Prostate gland (tissue), 2 donors: ENCODE measurements at regions of chr12 and their contacts with region 1.

Region 1: DNA sequence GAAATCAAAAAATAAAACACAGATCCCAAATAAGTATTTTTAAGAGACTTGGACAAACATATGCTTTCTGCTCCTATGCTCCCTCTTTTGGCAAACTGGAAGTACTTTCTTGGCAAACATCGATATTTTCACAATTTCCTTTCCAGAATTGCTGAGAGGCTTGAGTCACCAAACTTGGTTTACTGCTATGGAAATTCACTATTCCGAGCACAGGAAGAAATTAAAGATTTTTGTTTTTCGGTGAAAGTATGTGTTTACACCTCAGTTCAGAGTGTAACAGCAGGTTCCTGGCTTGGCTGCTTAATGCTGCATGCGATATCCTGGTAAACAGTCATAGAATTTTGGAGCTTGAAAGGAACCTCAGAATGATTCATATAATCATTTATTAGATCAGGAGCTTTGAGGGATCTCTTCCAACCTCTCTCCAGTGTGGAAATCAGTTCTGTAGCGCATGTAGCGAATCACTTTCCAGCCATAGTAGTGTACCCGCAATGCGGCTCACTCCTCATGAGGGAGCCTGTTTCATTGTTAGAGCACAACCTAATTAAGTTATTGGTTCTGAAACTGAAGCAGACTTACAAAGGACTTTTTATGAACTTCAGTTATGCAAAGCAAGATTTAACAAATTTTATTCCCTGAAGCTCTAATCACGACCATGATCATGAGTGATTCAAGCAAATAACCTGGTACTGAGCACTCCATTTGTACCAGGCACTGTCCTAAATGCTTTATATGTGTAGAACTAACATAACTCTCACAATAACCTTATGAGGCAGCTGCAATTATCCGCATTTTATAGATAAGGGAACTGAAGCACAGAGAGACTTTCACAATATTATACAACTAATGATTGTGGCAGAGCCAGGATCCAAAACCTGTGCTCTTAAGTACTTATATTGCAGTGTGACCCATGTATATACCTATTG is 56.4 kb upstream of the ATP2A2 start:
- DNase-seq: peak; percentile 43
- H3K4me3 ChIP-seq: no peak overlapping the region
- H3K27ac ChIP-seq: peak overlapping the region; percentile 70 to 78
- H3K4me1 ChIP-seq: peaks cover 6% of the 10 kb centered on the region
- H3K27me3 ChIP-seq: no peaks in the 10 kb centered on the region
- CTCF ChIP-seq: peak in 3 of 4 experiments; percentile 29 to 66 (median 62)
- POLR2A ChIP-seq: no peak

Region 2: GRCh38 chr12:110109037-110109836 is 115.4 kb before region 1 on chr12:
- intact Hi-C with region 1: loop called (anchors 2 kb)
- DNase-seq: peak; percentile 69
- H3K4me3 ChIP-seq: no peak overlapping the region
- H3K27ac ChIP-seq: peak overlapping the region; percentile 83 to 87
- H3K4me1 ChIP-seq: no peaks in the 10 kb centered on the region
- H3K27me3 ChIP-seq: no peaks in the 10 kb centered on the region
- CTCF ChIP-seq: no peak
- POLR2A ChIP-seq: no peak

Region 3: DNA sequence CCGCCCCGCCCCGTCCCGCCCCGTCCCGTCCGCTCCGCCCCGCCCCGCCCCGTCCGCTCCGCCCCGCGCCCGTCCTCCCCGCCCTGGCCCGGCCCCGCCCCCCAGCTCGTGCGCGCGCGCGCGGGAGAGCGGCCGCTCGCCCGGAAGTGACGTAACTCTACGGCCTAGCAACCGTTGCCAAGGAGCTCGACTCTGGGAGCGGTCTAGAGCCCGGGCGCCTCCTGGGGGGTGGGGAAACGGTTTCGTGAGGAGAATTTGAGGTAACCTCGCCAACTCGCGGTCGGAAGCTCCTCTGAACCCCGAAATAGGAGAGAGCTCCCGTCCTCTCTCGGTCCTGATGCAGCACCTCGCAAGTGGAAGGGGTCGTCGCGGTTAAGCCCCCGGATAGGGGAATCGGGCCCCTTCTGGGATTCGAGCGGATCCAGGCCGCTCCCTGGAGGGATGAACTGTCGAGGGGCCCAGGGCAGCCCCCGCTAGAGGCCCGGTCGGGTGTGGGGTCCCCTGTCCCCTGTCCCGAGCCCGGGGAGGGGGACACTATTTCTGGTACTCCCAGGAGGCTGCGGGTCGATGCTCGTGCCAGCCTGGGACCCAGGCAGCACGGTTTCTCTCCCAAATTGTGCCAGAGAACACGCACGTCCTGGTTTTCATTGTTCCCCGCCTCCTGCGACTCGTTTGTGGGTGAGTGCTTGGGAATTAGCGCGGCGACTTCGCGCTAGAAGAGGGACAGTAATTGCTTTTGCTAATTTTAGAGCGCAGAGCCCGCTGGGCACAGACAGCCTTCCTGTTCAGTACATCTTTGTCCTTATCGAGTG is 100.3 kb before region 1 on chr12 and contains the start of gene IFT81:
- intact Hi-C with region 1: loop called (anchors 5 kb)
- DNase-seq: peak; percentile 95
- H3K4me3 ChIP-seq: peak within 1 kb of the TSS; percentile 97 to 98
- H3K27ac ChIP-seq: peak within 1 kb of the TSS; percentile 90 to 91
- H3K4me1 ChIP-seq: peaks cover 2% of the 10 kb centered on the region
- H3K27me3 ChIP-seq: no peaks in the 10 kb centered on the region
- CTCF ChIP-seq: no peak
- POLR2A ChIP-seq: peak; percentile 52
- total RNA-seq, gene IFT81: 11.2 to 16.1 TPM

Region 4: DNA sequence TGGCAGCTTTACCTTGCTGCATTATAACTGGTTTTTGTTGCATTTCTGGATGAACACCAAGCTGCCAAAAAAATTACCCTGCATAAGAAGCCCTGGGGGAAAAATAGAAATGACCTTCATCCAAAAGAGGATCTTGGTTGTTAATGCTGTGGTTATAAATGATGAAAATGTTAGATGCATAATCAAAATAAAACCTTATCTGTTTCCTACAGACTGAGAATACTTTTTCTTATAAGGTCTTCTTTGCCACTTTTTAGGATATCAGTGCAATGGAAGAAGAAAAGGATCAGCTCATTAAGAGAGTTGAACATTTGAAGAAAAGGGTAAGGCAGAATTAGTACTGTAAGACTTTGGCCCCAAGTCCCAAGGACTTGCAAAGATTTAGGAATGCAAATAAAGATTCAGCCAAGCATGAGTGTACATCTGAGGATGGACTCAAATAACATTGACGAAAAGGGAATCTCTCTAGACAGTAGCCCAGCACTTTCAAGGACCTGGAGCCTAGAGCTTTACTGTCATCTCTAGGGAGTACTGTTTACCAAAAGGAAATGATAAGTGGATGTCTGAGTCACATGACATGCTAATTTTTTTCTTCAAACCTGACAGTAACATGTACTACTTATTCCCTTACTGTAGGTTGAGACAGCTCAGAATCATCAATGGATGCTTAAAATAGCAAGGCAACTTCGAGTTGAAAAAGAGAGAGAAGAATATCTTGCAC is 89.8 kb before region 1 on chr12:
- intact Hi-C with region 1: no loop called
- DNase-seq: no peak
- H3K4me3 ChIP-seq: no peak overlapping the region
- H3K27ac ChIP-seq: peak overlapping the region in 1 of 2 donors; percentile 21
- H3K4me1 ChIP-seq: no peaks in the 10 kb centered on the region
- H3K27me3 ChIP-seq: no peaks in the 10 kb centered on the region
- CTCF ChIP-seq: no peak
- POLR2A ChIP-seq: no peak

Region 5: DNA sequence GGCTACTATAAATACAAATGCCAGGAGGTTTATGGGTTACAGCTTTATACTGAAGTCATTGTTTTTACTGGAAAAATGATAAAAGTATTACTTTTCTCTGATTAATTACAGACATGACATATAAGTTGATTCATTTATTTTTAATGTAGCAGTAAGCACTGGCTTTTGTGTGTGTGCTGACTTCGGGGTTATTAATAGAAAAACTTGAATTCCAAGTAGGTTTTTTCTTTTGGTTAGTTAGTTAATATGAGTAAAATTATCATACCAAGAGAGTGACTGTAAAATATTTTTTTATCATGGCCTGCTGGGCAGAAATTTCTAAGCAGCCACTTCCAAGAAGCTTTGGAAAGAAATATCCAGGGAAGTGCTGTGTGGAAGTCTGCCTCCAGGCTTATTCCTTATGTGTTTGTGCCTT is 44.0 kb before region 1 on chr12:
- intact Hi-C with region 1: loop called (anchors 5 kb)
- DNase-seq: no peak
- H3K4me3 ChIP-seq: no peak overlapping the region
- H3K27ac ChIP-seq: no peak overlapping the region
- H3K4me1 ChIP-seq: no peaks in the 10 kb centered on the region
- H3K27me3 ChIP-seq: no peaks in the 10 kb centered on the region
- CTCF ChIP-seq: no peak
- POLR2A ChIP-seq: no peak

Region 6: GRCh38 chr12:110270125-110270962 is 45.7 kb after region 1 on chr12:
- intact Hi-C with region 1: no loop called
- DNase-seq: peak; percentile 74
- H3K4me3 ChIP-seq: no peak overlapping the region
- H3K27ac ChIP-seq: peak overlapping the region; percentile 58 to 65
- H3K4me1 ChIP-seq: no peaks in the 10 kb centered on the region
- H3K27me3 ChIP-seq: no peaks in the 10 kb centered on the region
- CTCF ChIP-seq: no peak
- POLR2A ChIP-seq: no peak

Region 7: DNA sequence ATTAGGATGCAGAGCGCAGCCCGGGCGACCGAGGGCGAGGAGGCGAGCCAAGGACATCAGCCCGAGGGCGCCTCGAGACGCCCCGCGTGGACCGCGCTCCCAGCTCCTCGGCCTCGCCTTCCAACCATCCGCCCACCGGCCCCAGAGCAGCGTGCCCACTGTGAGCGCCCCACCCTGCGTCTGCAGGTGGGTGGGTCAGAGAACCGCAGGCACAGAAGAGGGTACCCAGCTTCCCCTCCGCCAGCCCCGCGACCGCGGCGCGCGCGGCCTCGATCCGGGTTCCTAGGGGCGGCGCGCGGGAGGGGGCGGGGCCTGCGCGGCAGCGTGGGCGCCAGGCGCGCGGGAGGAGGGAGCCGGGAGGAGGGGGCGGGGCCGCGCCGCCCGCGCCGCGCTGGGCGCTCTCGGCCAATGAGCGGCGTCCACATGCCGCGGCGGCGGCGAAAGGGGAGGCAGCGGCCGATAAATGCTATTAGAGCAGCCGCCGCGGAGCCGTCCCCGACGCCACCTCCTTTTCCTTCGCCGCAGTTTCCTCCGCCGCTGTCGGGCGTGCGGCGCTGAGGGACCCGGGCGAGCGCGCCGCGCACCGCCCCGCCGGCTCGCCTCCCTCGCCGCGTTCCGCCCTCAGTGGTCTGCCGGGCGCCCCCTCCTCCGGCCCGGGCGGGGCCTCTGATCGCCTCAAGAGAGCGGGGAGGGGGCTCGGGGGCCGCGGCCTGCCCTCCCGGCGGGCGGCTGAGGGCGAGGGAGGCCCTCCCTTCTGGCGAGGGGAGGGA is 56.3 kb after region 1 on chr12 and contains the start of gene ATP2A2:
- intact Hi-C with region 1: loop called (anchors 5 kb)
- DNase-seq: peak; percentile 89
- H3K4me3 ChIP-seq: peak within 1 kb of the TSS; percentile 93 to 94
- H3K27ac ChIP-seq: peak within 1 kb of the TSS; percentile 96 to 98
- H3K4me1 ChIP-seq: peaks cover 6% of the 10 kb centered on the region
- H3K27me3 ChIP-seq: no peaks in the 10 kb centered on the region
- CTCF ChIP-seq: peak in 1 of 4 experiments; percentile 8
- POLR2A ChIP-seq: peak; percentile 94
- total RNA-seq, gene ATP2A2: 121 to 209 TPM